Psoas muscle (tissue), 8 donors: ENCODE measurements at regions of chr9 and their contacts with region 1.

Region 1: GRCh38 chr9:22119537-22120158 is 110.5 kb upstream of the CDKN2B start:
- DNase-seq: no peak
- ATAC-seq: peak; percentile 64 to 86 (median 76)
- H3K4me3 ChIP-seq: no peak overlapping the region
- H3K27ac ChIP-seq: no peak overlapping the region
- H3K4me1 ChIP-seq: no peaks in the 10 kb centered on the region
- H3K27me3 ChIP-seq: no peaks in the 10 kb centered on the region
- CTCF ChIP-seq: peak; percentile 44

Region 2: DNA sequence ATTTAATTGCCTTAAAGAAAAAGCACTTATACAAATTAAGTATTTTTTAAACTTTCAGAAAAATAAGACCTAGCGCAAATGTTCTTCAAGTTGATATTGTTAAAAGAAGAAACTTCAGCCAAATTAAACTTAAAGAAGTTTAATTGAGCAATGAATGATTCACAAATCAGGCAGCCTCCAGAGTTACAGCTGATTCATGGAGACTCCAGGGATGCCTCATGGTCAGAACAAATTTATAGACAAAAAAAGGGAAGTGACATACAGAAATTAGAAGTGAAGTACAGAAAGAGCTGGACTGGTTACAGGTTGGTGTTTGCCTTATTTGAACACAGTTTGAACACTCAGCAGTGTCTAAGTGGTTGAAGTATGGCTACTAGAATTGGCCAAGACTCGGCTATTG is 185.8 kb before region 1 on chr9:
- intact Hi-C with region 1: no loop called
- DNase-seq: no peak
- ATAC-seq: no peak
- H3K4me3 ChIP-seq: no peak overlapping the region
- H3K27ac ChIP-seq: no peak overlapping the region
- H3K4me1 ChIP-seq: no peaks in the 10 kb centered on the region
- H3K27me3 ChIP-seq: no peaks in the 10 kb centered on the region
- CTCF ChIP-seq: no peak

Region 3: GRCh38 chr9:21995177-21996086 is 124.2 kb before region 1 on chr9:
- intact Hi-C with region 1: loop called in 1 of 2 experiments (anchors 10 kb)
- DNase-seq: peak; percentile 74 to 84
- ATAC-seq: peak; percentile 65 to 86 (median 74)
- H3K4me3 ChIP-seq: peak overlapping the region; percentile 98
- H3K27ac ChIP-seq: peak overlapping the region; percentile 60
- H3K4me1 ChIP-seq: peaks cover 5% of the 10 kb centered on the region
- H3K27me3 ChIP-seq: peaks cover 0 to 21% (median 7%) of the 10 kb centered on the region in 3 donors
- CTCF ChIP-seq: no peak

Region 4: GRCh38 chr9:22079873-22080341 is 39.7 kb before region 1 on chr9:
- intact Hi-C with region 1: no loop called
- DNase-seq: no peak
- ATAC-seq: peak; percentile 27 to 79 (median 61)
- H3K4me3 ChIP-seq: no peak overlapping the region
- H3K27ac ChIP-seq: no peak overlapping the region
- H3K4me1 ChIP-seq: no peaks in the 10 kb centered on the region
- H3K27me3 ChIP-seq: no peaks in the 10 kb centered on the region
- CTCF ChIP-seq: no peak

Region 5: GRCh38 chr9:22238809-22239684 is 119.4 kb after region 1 on chr9:
- intact Hi-C with region 1: loop called in 1 of 2 experiments (anchors 10 kb)
- DNase-seq: no peak
- ATAC-seq: peak in 1 of 4 donors; percentile 63
- H3K4me3 ChIP-seq: no peak overlapping the region
- H3K27ac ChIP-seq: no peak overlapping the region
- H3K4me1 ChIP-seq: no peaks in the 10 kb centered on the region
- H3K27me3 ChIP-seq: no peaks in the 10 kb centered on the region
- CTCF ChIP-seq: peak; percentile 52

Region 6: GRCh38 chr9:22363421-22363887 is 243.8 kb after region 1 on chr9:
- intact Hi-C with region 1: no loop called
- DNase-seq: no peak
- ATAC-seq: no peak
- H3K4me3 ChIP-seq: no peak overlapping the region
- H3K27ac ChIP-seq: no peak overlapping the region
- H3K4me1 ChIP-seq: no peaks in the 10 kb centered on the region
- H3K27me3 ChIP-seq: no peaks in the 10 kb centered on the region
- CTCF ChIP-seq: no peak